Activated B cell treated with CpG ODN at 0.5 μM for 24 hours (primary cell): ENCODE measurements at regions of chr2 and their contacts with region 1.

Region 1: GRCh38 chr2:181904022-181904632 is 12.6 kb downstream of the ITPRID2 start:
- DNase-seq: no peak
- ATAC-seq: no peak
- H3K4me3 Mint-ChIP-seq: no peak overlapping the region
- H3K27ac Mint-ChIP-seq: no peak overlapping the region
- H3K4me1 Mint-ChIP-seq: peaks cover 6% of the 10 kb centered on the region
- H3K27me3 Mint-ChIP-seq: no peaks in the 10 kb centered on the region
- CTCF ChIP-seq: peak; percentile 29

Region 2: DNA sequence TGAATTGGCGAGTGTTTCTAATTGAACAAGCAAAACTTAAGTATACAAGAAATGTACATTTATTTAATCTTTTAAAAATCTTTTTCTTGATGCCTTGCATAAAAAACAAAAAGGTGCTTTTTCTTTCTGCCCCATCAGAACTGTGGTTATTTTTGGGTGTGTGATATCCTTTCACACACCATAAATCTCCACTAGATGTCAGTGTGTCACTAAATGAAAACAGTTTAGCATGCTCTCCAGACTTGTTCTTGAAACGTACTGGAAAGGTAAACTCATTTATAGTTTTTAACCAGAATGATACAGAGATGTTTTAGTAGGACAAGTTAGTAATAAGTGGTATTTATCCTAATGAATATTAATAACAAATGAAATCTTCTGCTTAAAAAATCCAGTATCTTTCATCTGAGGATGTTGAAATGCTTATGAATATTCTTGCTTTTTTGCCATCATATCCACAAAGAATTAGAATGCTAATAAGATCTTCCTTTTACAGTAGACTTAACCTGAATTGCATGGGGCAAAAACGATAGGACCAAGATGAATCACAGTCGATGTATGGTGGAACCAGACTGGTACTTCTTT is 826.9 kb before region 1 on chr2:
- CTCF ChIA-PET with region 1: no interaction called
- POLR2A ChIA-PET with region 1: no interaction called
- intact Hi-C with region 1: loop called (anchors 1 kb)
- DNase-seq: no peak
- ATAC-seq: peak; percentile 58
- H3K4me3 Mint-ChIP-seq: no peak overlapping the region
- H3K27ac Mint-ChIP-seq: no peak overlapping the region
- H3K4me1 Mint-ChIP-seq: no peaks in the 10 kb centered on the region
- H3K27me3 Mint-ChIP-seq: no peaks in the 10 kb centered on the region
- CTCF ChIP-seq: no peak

Region 3: GRCh38 chr2:181104512-181105115 is 799.5 kb before region 1 on chr2:
- CTCF ChIA-PET with region 1: interaction called, 3 read pairs
- POLR2A ChIA-PET with region 1: no interaction called
- intact Hi-C with region 1: loop called (anchors 10 kb)
- DNase-seq: no peak
- ATAC-seq: no peak
- H3K4me3 Mint-ChIP-seq: no peak overlapping the region
- H3K27ac Mint-ChIP-seq: no peak overlapping the region
- H3K4me1 Mint-ChIP-seq: peaks cover 8% of the 10 kb centered on the region
- H3K27me3 Mint-ChIP-seq: no peaks in the 10 kb centered on the region
- CTCF ChIP-seq: no peak

Region 4: DNA sequence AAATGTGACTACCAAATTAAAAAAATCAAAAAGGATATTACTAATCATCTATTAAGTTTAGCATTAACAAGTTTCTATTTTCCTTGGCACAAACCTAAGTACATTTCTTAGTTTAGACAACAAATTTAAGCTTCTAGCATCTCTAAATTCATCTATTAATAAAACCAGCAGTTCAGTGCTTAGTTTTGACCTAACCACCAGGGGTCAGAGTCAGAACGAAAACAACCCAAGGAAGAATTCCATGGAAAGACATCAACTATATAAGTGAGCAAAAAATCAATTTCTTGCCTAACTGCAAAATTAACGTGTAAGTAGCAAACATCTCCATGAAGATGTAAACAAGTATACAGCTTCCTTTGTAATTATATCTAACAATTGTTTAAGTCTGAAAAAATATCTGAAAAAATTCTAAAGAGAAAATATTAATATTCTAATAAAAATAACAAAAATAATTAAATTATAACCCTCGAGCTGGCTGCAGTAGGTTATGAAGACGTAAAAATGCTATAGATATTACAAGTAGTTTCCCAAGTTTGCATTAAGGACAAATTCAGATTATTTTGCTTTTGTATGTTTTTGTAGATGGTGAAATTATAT is 330.9 kb before region 1 on chr2:
- CTCF ChIA-PET with region 1: no interaction called
- POLR2A ChIA-PET with region 1: no interaction called
- intact Hi-C with region 1: loop called (anchors 5 kb)
- DNase-seq: no peak
- ATAC-seq: no peak
- H3K4me3 Mint-ChIP-seq: no peak overlapping the region
- H3K27ac Mint-ChIP-seq: no peak overlapping the region
- H3K4me1 Mint-ChIP-seq: no peaks in the 10 kb centered on the region
- H3K27me3 Mint-ChIP-seq: peaks cover 7% of the 10 kb centered on the region
- CTCF ChIP-seq: no peak

Region 5: DNA sequence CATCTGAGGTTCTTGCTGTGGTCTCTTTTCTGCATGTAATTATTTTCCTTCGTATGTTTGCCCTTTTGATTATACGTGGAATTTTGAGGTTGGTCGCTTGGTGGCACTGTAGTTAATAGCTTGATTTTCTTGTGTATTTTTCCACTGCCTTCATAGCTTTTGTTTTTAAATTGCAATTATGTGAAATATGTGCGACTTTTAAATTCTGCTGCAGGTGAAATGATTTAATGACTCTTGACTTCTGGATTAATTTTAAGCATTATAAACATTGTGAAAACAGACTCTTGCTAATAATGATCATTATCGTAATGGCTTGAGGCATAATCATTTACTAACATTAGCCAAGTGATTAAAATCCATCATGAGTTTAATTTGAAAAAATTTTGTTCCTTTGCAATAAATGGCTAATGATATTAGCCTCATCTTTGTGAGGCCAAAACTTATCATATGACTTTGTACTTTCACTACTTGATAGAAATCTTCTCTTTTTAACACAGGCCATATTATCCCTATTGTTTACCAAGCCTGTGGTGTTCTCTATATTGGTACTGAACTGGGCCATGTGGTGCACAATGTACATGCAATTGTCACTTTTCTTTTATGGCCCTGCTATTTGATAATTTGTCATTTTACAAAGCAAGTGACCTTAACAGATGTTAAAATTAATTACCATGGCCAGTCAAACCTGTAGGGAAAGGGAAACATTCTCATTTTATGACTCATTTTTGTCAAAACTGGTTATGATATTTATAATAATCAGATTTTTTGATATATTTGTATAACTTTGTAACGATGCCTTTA is 161.0 kb before region 1 on chr2:
- CTCF ChIA-PET with region 1: interaction called, 20 read pairs
- POLR2A ChIA-PET with region 1: no interaction called
- intact Hi-C with region 1: loop called (anchors 1 kb)
- DNase-seq: no peak
- ATAC-seq: no peak
- H3K4me3 Mint-ChIP-seq: no peak overlapping the region
- H3K27ac Mint-ChIP-seq: no peak overlapping the region
- H3K4me1 Mint-ChIP-seq: no peaks in the 10 kb centered on the region
- H3K27me3 Mint-ChIP-seq: peaks cover 12% of the 10 kb centered on the region
- CTCF ChIP-seq: no peak

Region 6: DNA sequence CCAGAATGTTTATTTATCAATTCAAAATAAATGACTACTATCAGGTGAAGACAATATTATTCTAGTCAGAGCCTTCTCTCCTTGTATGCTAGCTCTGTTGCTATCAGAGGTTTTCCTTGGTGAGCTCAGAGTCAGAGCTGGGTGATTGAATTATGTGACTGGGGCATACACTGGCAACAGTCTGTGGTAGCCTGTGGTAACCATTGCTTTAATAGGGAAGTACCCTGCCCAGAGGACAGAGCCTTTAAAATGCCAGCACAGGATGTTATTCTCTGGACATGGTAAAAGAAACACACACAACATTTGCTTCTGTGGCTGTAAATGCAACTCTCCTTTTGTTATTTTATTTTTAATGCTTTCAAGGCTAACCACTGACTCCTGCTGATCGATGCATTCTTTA is 206.2 kb after region 1 on chr2:
- CTCF ChIA-PET with region 1: no interaction called
- POLR2A ChIA-PET with region 1: no interaction called
- intact Hi-C with region 1: no loop called
- DNase-seq: no peak
- ATAC-seq: no peak
- H3K4me3 Mint-ChIP-seq: no peak overlapping the region
- H3K27ac Mint-ChIP-seq: no peak overlapping the region
- H3K4me1 Mint-ChIP-seq: no peaks in the 10 kb centered on the region
- H3K27me3 Mint-ChIP-seq: peaks cover 11% of the 10 kb centered on the region
- CTCF ChIP-seq: no peak